ENCODE measurements at regions of chr12 and their contacts with region 1.

Region 1: DNA sequence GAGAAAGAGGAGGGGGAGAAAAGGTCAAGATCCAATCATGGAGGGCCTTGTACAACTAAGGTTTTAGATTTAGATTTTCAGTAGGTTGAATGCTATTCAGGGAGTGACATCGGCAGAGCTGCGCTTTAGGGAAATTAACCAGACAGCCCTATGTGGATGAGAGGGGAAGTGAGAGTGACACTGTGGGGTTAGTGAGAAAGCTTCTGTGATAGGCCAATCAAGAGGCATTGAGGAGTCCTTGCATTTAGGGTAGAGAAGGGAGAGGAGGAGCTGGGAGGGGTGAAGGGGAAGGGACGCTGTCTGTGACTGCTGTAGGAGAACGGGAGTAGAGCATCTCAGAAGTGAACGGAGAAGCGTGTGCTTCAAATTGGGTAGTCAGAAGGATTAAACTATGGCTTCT is 3.4 kb downstream of the HSD17B6 start:
- DNase-seq: peak; percentile 70
- ATAC-seq: peak; percentile 99
- H3K4me3 ChIP-seq: no peak overlapping the region
- H3K27ac ChIP-seq: no peak overlapping the region; the same call in 1 of the 2 replicates
- H3K4me1 ChIP-seq: peaks cover 12% of the 10 kb centered on the region
- H3K27me3 ChIP-seq: no peaks in the 10 kb centered on the region
- CTCF ChIP-seq: no peak
- EP300 ChIP-seq: peak in 1 of 2 experiments; percentile 82; a peak in 2 of 4 replicates
- POLR2A ChIP-seq: no peak
- RAD21 ChIP-seq: no peak

Region 2: GRCh38 chr12:56987551-56988053 is 221.1 kb after region 1 on chr12:
- CTCF ChIA-PET with region 1: interaction called, 53 read pairs
- POLR2A ChIA-PET with region 1: interaction called, 5 read pairs
- RAD21 ChIA-PET with region 1: interaction called, 29 read pairs
- SMC1A ChIA-PET with region 1: interaction called, 11 read pairs
- in situ Hi-C with region 1: no loop called
- intact Hi-C with region 1: no loop called
- DNase-seq: no peak
- ATAC-seq: peak; percentile 90
- H3K4me3 ChIP-seq: no peak overlapping the region
- H3K27ac ChIP-seq: no peak overlapping the region
- H3K4me1 ChIP-seq: peaks cover 18% of the 10 kb centered on the region
- H3K27me3 ChIP-seq: no peaks in the 10 kb centered on the region
- CTCF ChIP-seq: peak; percentile 93 to 97 (median 96)
- EP300 ChIP-seq: no peak
- POLR2A ChIP-seq: no peak
- RAD21 ChIP-seq: peak; percentile 88

Region 3: GRCh38 chr12:56998981-56999380 is 232.4 kb after region 1 on chr12:
- CTCF ChIA-PET with region 1: interaction called, 127 read pairs
- POLR2A ChIA-PET with region 1: no interaction called
- RAD21 ChIA-PET with region 1: interaction called, 5 read pairs
- SMC1A ChIA-PET with region 1: interaction called, 125 read pairs
- in situ Hi-C with region 1: no loop called
- intact Hi-C with region 1: no loop called
- DNase-seq: peak; percentile 69
- ATAC-seq: peak; percentile 89
- H3K4me3 ChIP-seq: no peak overlapping the region
- H3K27ac ChIP-seq: peak overlapping the region; percentile 56
- H3K4me1 ChIP-seq: peaks cover 34% of the 10 kb centered on the region
- H3K27me3 ChIP-seq: no peaks in the 10 kb centered on the region
- CTCF ChIP-seq: no peak
- EP300 ChIP-seq: peak in 1 of 2 experiments; percentile 59; a peak in 2 of 4 replicates
- POLR2A ChIP-seq: no peak
- RAD21 ChIP-seq: no peak

Region 4: DNA sequence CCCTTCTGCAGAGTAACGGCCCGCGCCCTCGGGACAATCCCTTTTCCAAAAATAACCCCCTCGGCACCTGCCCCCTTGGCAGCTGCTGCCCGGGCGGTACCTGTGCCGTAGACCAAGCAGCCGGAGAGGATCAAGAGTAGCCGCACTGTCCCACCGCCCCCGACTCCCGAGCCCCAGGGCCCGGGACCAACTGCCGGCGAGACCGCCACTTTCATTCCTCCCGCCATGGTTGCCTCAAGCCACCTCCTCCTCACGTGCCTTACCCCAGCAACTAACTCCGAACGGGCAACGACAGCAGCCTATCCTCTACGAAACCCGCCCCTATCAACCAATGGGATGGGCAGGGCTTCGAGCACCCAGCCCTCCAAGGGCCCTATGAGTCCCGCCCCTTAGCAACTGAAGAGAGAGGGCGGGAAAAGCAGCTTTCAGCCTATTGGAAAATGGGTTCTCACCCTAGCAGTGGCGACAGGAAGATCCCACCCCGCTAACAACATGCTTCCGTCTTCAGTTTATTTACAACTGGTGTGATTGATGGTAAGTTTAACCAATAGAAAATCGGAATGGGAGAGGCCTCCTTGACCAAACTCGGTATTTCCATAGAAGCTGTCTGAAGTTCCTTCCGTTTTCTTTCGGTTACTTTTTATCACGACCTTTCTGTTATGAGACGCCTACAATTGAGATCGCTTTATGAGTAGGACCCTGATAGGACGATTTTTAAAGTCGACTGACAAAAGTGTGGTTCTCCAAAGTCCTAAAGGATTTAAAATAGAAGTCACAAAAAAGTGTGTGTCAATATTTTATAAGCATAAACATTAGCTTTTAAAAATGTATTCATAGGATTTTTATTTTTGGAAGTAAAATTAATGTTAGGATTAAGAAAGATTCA is 312.2 kb after region 1 on chr12 and contains the start of gene NEMP1:
- CTCF ChIA-PET with region 1: no interaction called
- POLR2A ChIA-PET with region 1: no interaction called
- RAD21 ChIA-PET with region 1: no interaction called
- SMC1A ChIA-PET with region 1: no interaction called
- in situ Hi-C with region 1: no loop called
- intact Hi-C with region 1: no loop called
- DNase-seq: peak; percentile 100
- ATAC-seq: peak; percentile 99
- H3K4me3 ChIP-seq: peak within 1 kb of the TSS; percentile 96
- H3K27ac ChIP-seq: peak within 1 kb of the TSS; percentile 92
- H3K4me1 ChIP-seq: peaks cover 6% of the 10 kb centered on the region; the same call in 1 of the 2 replicates
- H3K27me3 ChIP-seq: no peaks in the 10 kb centered on the region
- CTCF ChIP-seq: no peak
- EP300 ChIP-seq: no peak
- POLR2A ChIP-seq: peak; percentile 90
- RAD21 ChIP-seq: no peak
- polyA plus RNA-seq, gene NEMP1: 4.0 to 4.7 TPM

Measured in GM12878 (cell line).